Breast epithelium (tissue), 4 donors: ENCODE measurements at regions of chr2 and their contacts with region 1.

Region 1: DNA sequence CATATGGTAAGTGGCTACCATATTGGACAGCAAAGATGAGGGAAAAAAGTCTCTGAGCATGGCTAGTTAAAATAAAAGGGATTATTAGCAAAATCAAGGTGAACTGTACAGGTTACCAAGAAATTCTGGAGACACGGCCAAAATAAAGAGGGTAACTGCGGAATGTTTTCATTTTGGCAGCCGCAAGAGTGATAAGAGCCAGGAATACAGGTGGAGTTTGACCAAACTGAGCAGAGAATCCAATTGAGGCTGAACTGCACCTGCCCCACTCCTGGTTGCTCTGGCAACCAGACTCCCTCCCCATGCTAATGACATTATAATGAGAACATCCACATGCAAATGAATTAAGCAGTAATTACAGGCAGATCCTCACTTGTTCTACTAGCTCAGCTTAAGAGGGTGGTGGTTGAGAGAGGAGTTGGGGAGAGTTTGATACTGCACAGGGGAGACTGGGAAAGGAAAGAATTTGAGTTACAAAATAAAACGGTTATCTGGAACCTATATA is 18.8 kb upstream of the EPHA4 start:
- DNase-seq: no peak
- H3K4me3 ChIP-seq: no peak overlapping the region
- H3K27ac ChIP-seq: no peak overlapping the region
- H3K4me1 ChIP-seq: no peaks in the 10 kb centered on the region
- H3K27me3 ChIP-seq: no peaks in the 10 kb centered on the region
- CTCF ChIP-seq: no peak
- POLR2A ChIP-seq: no peak

Region 2: DNA sequence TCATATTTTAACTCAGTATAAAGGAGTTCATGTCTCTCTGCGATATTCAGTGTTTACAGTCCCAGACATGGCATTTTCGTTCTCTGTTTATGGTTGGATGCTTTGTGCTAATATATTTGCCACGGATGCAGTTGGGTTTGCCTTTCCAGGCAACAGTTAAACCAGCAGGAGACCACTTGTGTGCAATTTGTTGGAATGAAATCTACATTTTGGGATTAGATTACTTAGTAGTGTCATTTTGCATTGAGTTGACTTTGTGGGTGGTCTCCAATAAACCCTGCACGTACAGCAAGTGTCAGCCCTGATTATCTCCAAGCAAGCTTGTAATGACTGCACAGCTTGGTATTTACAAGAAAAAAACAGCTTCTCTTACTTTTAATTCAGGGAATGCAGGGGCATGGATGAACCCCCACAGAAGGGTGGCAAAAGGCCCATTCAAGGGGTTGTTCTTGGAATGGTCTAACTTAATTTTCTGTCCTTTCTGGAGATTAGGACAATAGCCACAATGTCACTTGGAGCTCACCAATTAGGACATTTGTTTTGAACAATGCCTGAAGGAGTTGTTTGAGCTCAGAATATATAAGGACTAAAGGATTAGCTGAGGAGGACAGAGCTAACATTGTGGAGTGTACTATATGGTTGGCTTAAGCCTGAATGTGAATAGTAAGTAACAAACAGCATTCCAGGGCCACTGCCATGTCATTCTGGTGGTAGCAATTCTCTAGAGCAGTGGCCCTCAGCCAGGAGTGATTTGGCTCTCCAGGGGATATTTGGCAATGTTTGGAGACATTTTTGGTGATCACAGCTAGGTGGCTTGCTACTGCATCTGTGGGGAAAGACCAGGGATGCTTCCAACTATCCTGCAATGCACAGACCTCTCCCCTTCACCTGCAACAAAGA is 1842.0 kb before region 1 on chr2:
- intact Hi-C with region 1: loop called (anchors 5 kb)
- DNase-seq: no peak
- H3K4me3 ChIP-seq: no peak overlapping the region
- H3K27ac ChIP-seq: no peak overlapping the region
- H3K4me1 ChIP-seq: no peaks in the 10 kb centered on the region
- H3K27me3 ChIP-seq: no peaks in the 10 kb centered on the region
- CTCF ChIP-seq: no peak
- POLR2A ChIP-seq: no peak

Region 3: GRCh38 chr2:219954331-219954730 is 1636.6 kb before region 1 on chr2:
- intact Hi-C with region 1: no loop called
- DNase-seq: no peak
- H3K4me3 ChIP-seq: no peak overlapping the region
- H3K27ac ChIP-seq: no peak overlapping the region
- H3K4me1 ChIP-seq: no peaks in the 10 kb centered on the region
- H3K27me3 ChIP-seq: no peaks in the 10 kb centered on the region
- CTCF ChIP-seq: no peak
- POLR2A ChIP-seq: no peak

Region 4: GRCh38 chr2:221573430-221574230 is 17.3 kb before region 1 on chr2:
- intact Hi-C with region 1: no loop called
- DNase-seq: peak; percentile 68 to 82
- H3K4me3 ChIP-seq: peak overlapping the region; percentile 56 to 79 (median 74)
- H3K27ac ChIP-seq: peak overlapping the region; percentile 76 to 89
- H3K4me1 ChIP-seq: no peaks in the 10 kb centered on the region
- H3K27me3 ChIP-seq: peaks cover 0 to 5% of the 10 kb centered on the region in 2 donors
- CTCF ChIP-seq: peak; percentile 96 to 97 (median 96)
- POLR2A ChIP-seq: no peak

Region 5: DNA sequence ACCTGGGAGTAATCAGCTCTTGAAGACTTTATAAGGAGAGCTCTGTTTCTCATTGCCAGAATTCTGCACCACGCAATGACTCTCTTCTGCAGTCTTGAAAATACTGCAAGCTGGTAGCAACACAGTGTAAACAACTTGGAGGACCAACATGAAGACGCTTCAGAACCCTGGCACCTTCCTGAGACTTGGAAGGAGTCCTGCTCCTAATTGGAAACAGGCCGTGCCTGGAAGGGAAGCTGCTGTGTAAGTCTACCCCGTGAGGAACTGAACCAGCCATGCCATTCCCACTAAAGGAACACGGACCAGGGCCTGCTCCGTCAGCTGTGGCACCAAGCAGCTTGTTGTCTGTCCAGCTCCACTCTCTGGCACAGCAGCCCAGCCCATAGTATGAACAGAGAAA is 536.7 kb after region 1 on chr2:
- intact Hi-C with region 1: no loop called
- DNase-seq: no peak
- H3K4me3 ChIP-seq: no peak overlapping the region
- H3K27ac ChIP-seq: no peak overlapping the region
- H3K4me1 ChIP-seq: no peaks in the 10 kb centered on the region
- H3K27me3 ChIP-seq: no peaks in the 10 kb centered on the region
- CTCF ChIP-seq: no peak
- POLR2A ChIP-seq: no peak